AG04449 (cell line): ENCODE measurements at regions of chr9 and their contacts with region 1.

Region 1: GRCh38 chr9:126939821-126940221 is 25.2 kb downstream of the RALGPS1 start:
- DNase-seq: no peak
- H3K4me3 ChIP-seq: no peak overlapping the region
- CTCF ChIP-seq: no peak

Region 2: GRCh38 chr9:126927419-126927818 is 12.4 kb before region 1 on chr9:
- CTCF ChIA-PET with region 1: interaction called, 13 read pairs
- POLR2A ChIA-PET with region 1: no interaction called
- DNase-seq: no peak
- H3K4me3 ChIP-seq: no peak overlapping the region
- CTCF ChIP-seq: no peak

Region 3: DNA sequence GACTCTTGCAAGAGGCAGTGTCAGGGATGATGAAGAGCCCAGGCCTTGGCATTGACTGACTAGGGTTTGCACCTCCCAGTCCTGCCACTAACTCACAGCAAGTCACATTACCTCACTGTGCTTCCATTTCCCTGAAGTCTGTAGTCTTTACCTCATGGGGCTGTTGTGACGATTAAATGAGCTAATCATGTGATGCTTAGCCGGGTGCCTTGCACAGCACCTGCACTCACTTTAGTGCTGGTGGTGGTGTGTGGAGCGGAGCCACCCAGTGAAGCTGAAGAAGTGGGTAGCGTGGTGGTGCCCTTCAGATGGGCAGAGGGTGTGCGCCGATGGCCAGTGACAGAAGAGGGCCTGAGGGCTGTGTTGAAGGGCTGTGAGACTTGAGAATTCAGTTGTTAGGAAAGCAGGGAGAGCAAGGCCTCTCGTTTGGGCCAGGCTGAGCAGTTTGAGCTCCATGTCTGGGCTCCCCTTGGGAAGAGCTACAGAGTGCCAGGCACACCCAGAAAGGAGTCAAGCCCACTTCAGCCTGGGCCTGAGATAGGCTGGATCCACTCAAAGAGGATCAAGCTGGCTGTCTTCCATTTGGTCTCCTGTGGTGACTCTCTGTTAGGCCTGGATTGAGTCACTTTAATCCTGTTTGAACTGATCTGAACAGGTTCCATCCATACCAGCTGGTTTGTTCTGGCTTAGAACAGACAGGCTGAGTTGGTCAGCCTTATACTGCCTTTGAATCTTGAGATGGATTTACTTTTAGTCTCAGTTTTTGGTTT is 17.3 kb after region 1 on chr9:
- CTCF ChIA-PET with region 1: interaction called, 26 read pairs
- POLR2A ChIA-PET with region 1: no interaction called
- DNase-seq: no peak
- H3K4me3 ChIP-seq: no peak overlapping the region
- CTCF ChIP-seq: no peak

Region 4: DNA sequence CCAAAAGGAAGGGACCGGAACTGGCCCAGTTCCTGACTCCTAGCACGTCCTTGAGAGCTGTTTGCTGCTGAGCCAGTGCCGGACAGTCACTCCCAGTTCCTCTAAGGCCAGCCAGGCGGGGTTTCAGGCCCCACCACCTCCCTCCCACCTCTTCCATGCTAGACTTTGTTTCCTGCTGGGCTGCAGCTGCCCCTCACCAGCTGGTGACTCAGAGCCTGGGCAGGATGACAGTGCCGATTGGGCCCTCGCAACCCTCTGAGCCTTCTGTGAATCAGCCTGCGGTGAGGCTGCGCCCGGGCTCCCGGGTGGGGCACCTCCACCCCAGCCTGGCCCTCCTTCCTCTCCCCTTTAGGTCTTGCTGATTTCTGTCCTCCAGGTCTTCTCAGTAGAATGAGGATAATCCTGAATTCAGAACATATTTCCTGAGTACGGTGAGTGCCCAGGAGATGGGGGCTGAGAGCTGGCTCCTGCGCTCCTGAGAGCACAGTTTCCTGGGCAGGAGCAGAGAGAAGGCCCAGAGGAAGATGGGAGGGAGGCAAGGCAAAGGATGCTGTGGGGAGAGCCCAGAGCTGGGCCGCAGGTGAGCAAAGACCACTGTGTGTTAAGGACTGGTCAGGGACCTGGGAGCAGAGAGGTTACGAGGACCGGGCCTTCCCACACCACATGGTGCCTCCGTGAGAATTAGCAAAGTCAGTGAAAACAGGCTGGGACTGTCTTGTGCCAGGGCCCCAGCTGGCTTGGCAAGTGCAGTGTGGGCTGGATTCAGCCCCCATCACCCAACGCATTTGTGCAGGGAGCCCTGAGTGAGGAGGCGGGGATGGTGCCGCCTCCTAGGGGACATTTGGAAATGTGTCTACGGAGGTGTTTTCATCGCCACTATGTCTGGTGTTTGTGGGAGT is 639.4 kb after region 1 on chr9:
- CTCF ChIA-PET with region 1: no interaction called
- POLR2A ChIA-PET with region 1: no interaction called
- DNase-seq: peak; percentile 84
- H3K4me3 ChIP-seq: peak overlapping the region; percentile 57
- CTCF ChIP-seq: peak; percentile 36